ENCODE measurements at regions of chr1 and their contacts with region 1.

Region 1: DNA sequence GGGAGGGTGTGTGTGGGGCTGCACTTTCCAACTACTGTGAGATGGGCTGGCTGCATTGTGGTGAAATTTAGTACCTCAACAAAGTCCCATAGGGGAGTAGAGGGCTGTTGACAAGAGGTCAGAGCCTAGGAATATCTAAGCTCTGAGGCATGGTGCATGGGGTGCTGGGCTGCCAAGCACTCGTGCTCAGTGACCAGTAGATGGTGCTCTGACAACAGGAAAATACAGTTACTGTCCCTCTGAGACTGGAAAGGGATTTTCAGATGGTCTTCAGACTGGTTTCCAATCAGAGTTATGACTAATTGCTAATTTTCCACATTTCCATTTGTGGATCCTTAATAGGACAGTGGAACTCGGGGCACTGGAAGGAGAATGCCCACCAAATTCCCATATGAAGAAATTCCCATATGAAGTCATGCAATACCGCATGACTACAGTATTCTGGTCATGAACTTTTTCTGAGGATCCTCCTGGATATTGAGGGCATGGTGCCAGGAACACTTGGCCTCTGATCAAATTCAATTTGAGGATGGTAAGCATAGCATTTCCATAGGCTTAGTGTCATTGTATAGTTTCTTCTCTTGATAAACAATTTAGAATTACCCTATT is 4.1 kb upstream of the CACNA1E start:
- DNase-seq: peak; percentile 48 to 65 (median 59)
- ATAC-seq: peak; percentile 85
- H3K4me3 ChIP-seq: no peak overlapping the region
- H3K27ac ChIP-seq: no peak overlapping the region
- H3K4me1 ChIP-seq: peaks cover 17% of the 10 kb centered on the region
- H3K27me3 ChIP-seq: peaks cover 0 to 10% of the 10 kb centered on the region in 2 donors
- CTCF ChIP-seq: peak; percentile 46 to 84 (median 78)
- POLR2A ChIP-seq: no peak

Region 2: DNA sequence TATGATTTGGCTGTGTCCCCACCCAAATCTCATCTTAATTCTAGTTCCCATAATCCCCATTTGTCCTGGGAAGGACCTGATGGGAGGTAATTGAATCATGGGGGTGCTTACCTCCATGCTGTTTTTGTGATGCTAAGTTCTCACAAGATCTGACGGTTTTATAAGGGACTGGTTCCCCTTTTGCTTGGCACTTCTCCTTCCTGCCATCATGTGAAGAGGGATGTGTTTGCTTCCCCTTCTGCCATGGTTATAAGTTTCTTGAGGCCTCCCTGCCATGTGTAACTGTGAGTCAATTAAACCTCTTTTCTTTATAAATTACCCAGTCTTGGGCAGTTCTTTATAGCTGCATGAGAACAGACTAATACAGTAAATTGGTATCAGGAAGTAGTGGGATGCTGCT is 468.2 kb after region 1 on chr1:
- intact Hi-C with region 1: loop called (anchors 10 kb)
- DNase-seq: no peak
- ATAC-seq: no peak
- H3K4me3 ChIP-seq: no peak overlapping the region
- H3K27ac ChIP-seq: no peak overlapping the region
- H3K4me1 ChIP-seq: no peaks in the 10 kb centered on the region
- H3K27me3 ChIP-seq: no peaks in the 10 kb centered on the region
- CTCF ChIP-seq: no peak
- POLR2A ChIP-seq: no peak

Region 3: DNA sequence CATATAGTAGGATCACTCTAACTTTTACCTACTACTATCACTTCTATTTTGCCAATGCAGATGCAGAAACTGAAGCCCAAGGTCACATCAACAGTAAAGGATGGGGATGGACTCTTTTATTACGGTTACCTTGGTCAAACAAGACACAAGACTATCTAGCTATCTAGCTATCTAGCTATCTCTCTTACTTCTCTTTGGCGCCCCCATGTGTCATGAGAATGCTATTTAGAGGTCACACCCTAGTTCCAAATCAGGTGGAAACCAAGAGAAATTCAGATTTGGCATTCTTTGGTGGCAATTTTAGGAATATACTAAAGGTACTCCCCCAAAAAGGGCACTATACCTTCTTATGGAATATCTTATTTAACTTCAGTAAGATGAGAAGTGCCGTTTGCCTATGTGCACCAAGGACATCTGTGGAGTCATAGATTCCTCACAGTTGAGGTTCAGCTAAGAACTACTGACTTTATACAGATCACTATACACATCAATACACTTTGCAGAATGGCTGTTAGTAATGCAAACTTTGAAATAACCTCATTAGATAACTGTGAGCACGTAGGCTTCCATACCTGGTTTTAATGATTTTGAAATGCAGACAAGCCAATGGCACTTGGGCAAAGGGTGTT is 575.6 kb after region 1 on chr1:
- intact Hi-C with region 1: loop called (anchors 10 kb)
- DNase-seq: peak; percentile 34 to 50 (median 46)
- ATAC-seq: no peak
- H3K4me3 ChIP-seq: no peak overlapping the region
- H3K27ac ChIP-seq: no peak overlapping the region
- H3K4me1 ChIP-seq: no peaks in the 10 kb centered on the region
- H3K27me3 ChIP-seq: no peaks in the 10 kb centered on the region
- CTCF ChIP-seq: peak in 6 of 7 experiments; percentile 17 to 42 (median 39)
- POLR2A ChIP-seq: no peak

Measured in body of pancreas (tissue), 4 donors.